A549 (cell line): ENCODE measurements at regions of chr14 and their contacts with region 1.

Region 1: DNA sequence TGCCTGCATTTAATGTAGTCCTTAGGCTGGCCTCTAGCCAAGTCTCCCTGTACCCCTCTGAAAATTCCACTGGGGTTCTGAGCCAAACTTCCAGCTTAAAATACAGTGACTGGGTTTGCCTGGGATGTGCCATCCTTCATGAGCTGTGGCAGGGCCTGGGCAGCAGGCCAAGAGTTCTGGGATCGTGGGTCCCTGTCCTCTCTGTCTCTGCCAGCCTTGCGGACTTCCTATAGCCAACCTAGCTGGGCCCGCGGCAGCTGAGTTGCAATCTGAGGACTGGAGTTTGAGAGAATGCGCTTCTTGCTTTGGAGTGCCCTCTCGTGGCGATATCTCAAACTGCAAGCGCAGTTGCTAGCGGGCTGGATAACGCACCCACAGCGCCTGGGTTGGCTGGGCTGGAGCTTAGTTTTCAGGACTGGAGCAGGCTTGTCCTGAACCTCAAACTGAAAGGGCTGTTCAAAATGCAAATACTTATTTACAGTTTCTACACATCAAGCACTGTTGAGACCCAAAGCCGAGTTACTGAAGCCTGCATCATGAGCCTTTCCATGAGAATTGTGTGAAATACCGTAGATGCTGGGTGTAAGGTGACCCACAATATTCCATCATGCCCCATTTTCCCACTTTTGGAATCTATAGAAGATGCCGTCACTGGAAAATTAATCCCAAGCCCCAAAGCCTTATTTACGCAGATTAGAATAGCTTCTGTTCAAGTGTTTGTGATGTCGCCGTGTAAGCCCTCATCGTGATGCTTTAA is 7.3 kb upstream of the IFI27L2 start:
- DNase-seq: peak; percentile 74 to 83
- ATAC-seq: peak; percentile 87 to 98
- H3K4me3 ChIP-seq: no peak overlapping the region
- H3K27ac ChIP-seq: no peak overlapping the region
- H3K4me1 ChIP-seq: no peaks in the 10 kb centered on the region
- CTCF ChIP-seq: peak; percentile 85
- EP300 ChIP-seq: no peak
- POLR2A ChIP-seq: no peak
- RAD21 ChIP-seq: peak; percentile 84 to 93

Region 2: GRCh38 chr14:94001501-94002396 is 135.0 kb before region 1 on chr14:
- CTCF ChIA-PET with region 1: interaction called, 11 read pairs
- POLR2A ChIA-PET with region 1: no interaction called
- DNase-seq: peak; percentile 73 to 83
- ATAC-seq: peak; percentile 81 to 94
- H3K4me3 ChIP-seq: no peak overlapping the region
- H3K27ac ChIP-seq: no peak overlapping the region; a peak in 1 of 6 replicates
- H3K4me1 ChIP-seq: no peaks in the 10 kb centered on the region
- CTCF ChIP-seq: peak; percentile 91
- EP300 ChIP-seq: no peak
- POLR2A ChIP-seq: no peak
- RAD21 ChIP-seq: peak; percentile 79 to 88

Region 3: GRCh38 chr14:94051115-94051514 is 85.6 kb before region 1 on chr14:
- CTCF ChIA-PET with region 1: interaction called, 82 read pairs
- POLR2A ChIA-PET with region 1: interaction called, 4 read pairs
- DNase-seq: peak in 1 of 2 experiments; percentile 41
- ATAC-seq: peak; percentile 55 to 76; a peak in 3 of 6 replicates
- H3K4me3 ChIP-seq: no peak overlapping the region
- H3K27ac ChIP-seq: no peak overlapping the region
- H3K4me1 ChIP-seq: no peaks in the 10 kb centered on the region
- CTCF ChIP-seq: peak; percentile 46
- EP300 ChIP-seq: no peak
- POLR2A ChIP-seq: no peak
- RAD21 ChIP-seq: peak; percentile 29 to 34; a peak in 3 of 5 replicates

Region 4: DNA sequence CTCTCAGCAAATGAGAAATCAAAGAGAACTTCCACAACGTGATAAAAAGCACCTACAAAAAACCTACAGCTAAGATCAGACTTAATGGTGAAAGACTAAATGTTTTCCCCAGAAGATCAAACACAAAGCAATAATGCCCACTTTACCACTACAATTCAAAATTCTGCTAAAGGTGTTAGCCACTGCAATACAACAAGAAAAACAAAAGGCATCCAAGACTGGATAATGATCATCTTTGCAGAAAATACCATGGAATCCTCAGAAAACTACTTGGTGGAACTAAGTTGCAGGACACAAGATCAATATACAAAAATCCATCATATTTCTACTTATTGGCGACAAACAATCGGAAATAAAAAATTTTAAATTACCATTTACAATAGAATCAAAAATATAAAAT is 62.2 kb before region 1 on chr14:
- CTCF ChIA-PET with region 1: no interaction called
- POLR2A ChIA-PET with region 1: no interaction called
- DNase-seq: no peak
- ATAC-seq: no peak
- H3K4me3 ChIP-seq: no peak overlapping the region
- H3K27ac ChIP-seq: no peak overlapping the region
- H3K4me1 ChIP-seq: peaks cover 3% of the 10 kb centered on the region
- CTCF ChIP-seq: no peak
- EP300 ChIP-seq: no peak
- POLR2A ChIP-seq: no peak
- RAD21 ChIP-seq: no peak

Region 5: GRCh38 chr14:94115058-94115591 is 21.6 kb before region 1 on chr14:
- CTCF ChIA-PET with region 1: interaction called, 17 read pairs
- POLR2A ChIA-PET with region 1: no interaction called
- DNase-seq: no peak
- ATAC-seq: peak in 1 of 2 experiments; percentile 13; a peak in 2 of 6 replicates
- H3K4me3 ChIP-seq: no peak overlapping the region
- H3K27ac ChIP-seq: no peak overlapping the region
- H3K4me1 ChIP-seq: no peaks in the 10 kb centered on the region
- CTCF ChIP-seq: no peak
- EP300 ChIP-seq: no peak
- POLR2A ChIP-seq: no peak
- RAD21 ChIP-seq: no peak